Left ventricle myocardium superior (tissue), 1 donor: ENCODE measurements at regions of chr13 and their contacts with region 1.

Region 1: DNA sequence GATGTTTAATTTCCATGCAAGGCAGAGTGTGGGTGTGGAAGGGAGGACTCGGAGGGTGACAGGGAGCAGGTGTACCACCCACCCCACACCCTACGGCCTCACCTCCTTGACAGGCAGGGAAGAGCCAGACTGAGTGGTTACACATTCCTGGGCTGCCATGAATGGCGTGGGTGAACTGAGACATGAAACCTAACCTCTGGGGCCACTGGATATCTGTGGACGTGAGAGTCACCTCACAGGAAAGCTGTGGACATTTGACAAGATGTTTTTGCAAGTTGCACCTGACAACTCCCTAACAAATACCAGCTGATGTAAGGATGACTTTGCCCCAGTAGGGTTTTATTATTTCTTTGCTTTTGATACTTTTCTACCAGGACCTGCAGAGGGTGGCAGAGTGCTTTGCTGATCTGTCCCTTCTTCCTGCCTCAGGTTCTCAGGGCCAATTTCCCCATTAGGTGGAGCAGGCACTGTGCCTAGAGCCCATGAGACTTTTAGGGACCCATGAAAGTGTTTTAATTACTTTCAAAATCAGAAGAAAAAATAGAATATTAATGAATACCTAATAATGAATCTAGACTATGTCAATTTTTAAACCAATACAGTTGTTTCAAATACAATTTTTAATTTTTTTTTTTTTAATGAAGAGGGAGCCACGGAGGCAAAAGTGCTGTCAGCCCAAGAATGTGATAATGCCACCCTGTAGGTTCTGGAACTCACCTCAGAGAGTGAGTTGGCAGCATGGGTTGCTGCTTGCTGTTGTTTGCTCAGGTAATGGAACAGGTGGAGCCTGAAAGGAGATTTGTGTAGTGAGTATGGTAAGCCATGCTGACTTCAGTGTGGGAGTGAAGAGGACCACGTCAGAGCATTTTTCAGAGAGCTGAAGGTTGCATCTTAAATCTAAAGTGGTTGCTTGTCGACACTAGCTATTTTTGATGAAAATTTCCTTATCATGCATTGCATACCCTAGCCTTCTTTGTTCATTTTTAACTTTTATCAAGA is 58.0 kb upstream of the CYSLTR2 start:
- DNase-seq: peak; percentile 36
- ATAC-seq: peak; percentile 94

Region 2: GRCh38 chr13:48769107-48769704 is 173.5 kb after region 1 on chr13:
- intact Hi-C with region 1: loop called (anchors 2 kb)
- DNase-seq: peak; percentile 32
- ATAC-seq: peak; percentile 92

Region 3: GRCh38 chr13:48804821-48805601 is 209.3 kb after region 1 on chr13:
- intact Hi-C with region 1: no loop called
- DNase-seq: no peak
- ATAC-seq: no peak